Activated CD4-positive, alpha-beta memory T cell treated with anti-CD3 and anti-CD28 coated beads, Interleukin-2, amount 10 ng/mL, durations not matched to agents 7 days and 5 days (primary cell): ENCODE measurements at regions of chr10 and their contacts with region 1.

Region 1: GRCh38 chr10:87861953-87862678 is 1.2 kb downstream of the KLLN start:
- DNase-seq: peak; percentile 95
- H3K4me3 Mint-ChIP-seq: peak overlapping the region; percentile 92
- H3K27ac Mint-ChIP-seq: peak overlapping the region; percentile 93
- H3K4me1 Mint-ChIP-seq: peaks cover 29% of the 10 kb centered on the region
- H3K27me3 Mint-ChIP-seq: no peaks in the 10 kb centered on the region

Region 2: DNA sequence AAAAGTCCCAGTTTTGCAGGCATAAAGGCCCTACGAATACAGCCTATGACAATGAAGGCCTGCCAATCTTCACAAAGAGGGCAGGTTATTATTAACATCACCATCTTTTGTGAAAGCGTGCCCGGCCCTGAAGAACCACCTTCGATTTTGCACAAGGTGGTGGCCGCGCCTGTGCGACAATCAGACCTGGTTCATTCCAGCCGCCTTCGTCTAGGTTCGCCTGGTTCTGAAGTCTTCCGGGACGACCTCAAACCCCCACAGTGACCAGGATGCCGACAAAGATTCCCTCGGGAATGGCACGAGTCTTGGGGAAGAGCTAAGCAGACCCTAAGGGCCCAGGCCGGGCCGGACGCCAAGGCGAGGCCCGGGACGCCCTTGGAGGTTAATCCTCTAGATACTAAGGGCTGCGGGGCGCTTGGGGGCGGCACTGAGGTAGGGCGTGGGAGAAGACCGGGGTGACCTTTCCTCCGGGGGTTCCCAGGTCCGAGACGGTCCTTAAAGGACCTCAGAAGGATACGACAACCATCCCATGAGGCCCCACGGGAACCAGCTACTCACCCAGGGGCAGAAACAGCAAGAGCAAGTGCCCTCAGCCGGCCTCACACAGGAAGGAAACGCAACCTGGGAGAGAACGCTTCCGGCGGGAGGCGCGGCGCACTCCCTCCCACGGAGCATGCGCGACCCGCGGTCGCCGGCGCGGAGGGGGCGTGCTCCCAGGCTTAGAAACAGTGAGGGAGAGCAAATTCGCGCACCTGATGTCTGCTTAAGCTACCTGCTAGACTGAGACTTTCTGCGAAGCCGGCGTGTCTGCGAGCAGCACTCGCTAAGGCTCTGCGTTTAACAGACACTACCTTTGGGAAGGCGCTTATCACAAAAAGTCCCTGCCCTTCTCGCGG is 44.3 kb before region 1 on chr10 and contains the start of gene ATAD1:
- CTCF ChIA-PET with region 1: interaction called, 10 read pairs
- POLR2A ChIA-PET with region 1: interaction called, 74 read pairs
- DNase-seq: peak; percentile 91
- H3K4me3 Mint-ChIP-seq: peak within 1 kb of the TSS; percentile 98
- H3K27ac Mint-ChIP-seq: peak within 1 kb of the TSS; percentile 82
- H3K4me1 Mint-ChIP-seq: peaks cover 35% of the 10 kb centered on the region
- H3K27me3 Mint-ChIP-seq: peaks cover 2% of the 10 kb centered on the region
- total RNA-seq, gene ATAD1: 38.5 to 42.2 TPM

Region 3: GRCh38 chr10:87850742-87851205 is 11.3 kb before region 1 on chr10:
- CTCF ChIA-PET with region 1: interaction called, 16 read pairs
- POLR2A ChIA-PET with region 1: interaction called, 32 read pairs
- DNase-seq: peak; percentile 58
- H3K4me3 Mint-ChIP-seq: no peak overlapping the region
- H3K27ac Mint-ChIP-seq: no peak overlapping the region
- H3K4me1 Mint-ChIP-seq: peaks cover 11% of the 10 kb centered on the region
- H3K27me3 Mint-ChIP-seq: no peaks in the 10 kb centered on the region

Region 4: DNA sequence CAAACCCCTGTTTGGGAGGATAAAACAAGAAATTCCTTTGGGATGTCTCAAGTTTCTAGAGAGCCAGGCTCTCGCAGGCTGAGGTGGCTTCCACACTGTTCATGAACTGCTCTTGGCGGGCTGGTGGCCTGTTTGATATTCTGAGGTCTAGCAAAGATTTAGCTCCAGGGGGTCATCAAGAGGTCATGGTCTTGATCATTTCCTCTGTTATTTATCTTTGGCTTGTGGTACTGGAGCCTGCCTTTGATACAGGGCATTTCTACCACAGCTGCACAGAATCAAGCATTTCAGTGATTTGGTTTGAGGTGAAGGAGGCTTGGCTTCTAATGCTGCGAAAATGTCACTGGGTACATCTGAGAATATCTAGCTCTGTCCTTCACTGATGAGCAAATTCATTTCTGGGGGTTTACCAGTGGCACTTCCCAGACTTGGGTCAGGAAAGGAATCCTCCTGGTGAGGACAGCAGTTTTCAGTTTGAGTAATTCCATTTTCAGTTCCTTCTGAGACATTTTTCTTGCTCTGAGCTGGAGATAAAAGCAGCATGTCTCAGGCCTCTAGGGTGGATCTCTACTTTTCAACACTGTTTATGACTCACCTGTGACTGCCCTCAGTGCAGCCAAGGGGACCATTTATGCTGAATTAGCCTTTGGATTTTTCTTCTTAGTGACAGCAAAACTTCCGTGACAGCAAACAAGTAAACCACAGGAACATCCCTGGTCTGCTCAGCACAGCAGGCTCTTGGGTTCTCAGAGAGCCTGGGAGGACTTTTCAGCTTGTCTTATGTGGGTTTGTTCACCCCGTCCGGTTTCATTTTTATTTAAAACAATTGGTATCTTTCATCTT is 409.0 kb after region 1 on chr10:
- CTCF ChIA-PET with region 1: interaction called, 5 read pairs
- POLR2A ChIA-PET with region 1: interaction called, 47 read pairs
- DNase-seq: peak; percentile 75
- H3K4me3 Mint-ChIP-seq: peak overlapping the region; percentile 47
- H3K27ac Mint-ChIP-seq: peak overlapping the region; percentile 91
- H3K4me1 Mint-ChIP-seq: peaks cover 61% of the 10 kb centered on the region
- H3K27me3 Mint-ChIP-seq: no peaks in the 10 kb centered on the region

Region 5: GRCh38 chr10:88392222-88392621 is 530.1 kb after region 1 on chr10:
- CTCF ChIA-PET with region 1: interaction called, 52 read pairs
- POLR2A ChIA-PET with region 1: interaction called, 136 read pairs
- DNase-seq: peak; percentile 33
- H3K4me3 Mint-ChIP-seq: no peak overlapping the region
- H3K27ac Mint-ChIP-seq: peak overlapping the region; percentile 13
- H3K4me1 Mint-ChIP-seq: peaks cover 22% of the 10 kb centered on the region
- H3K27me3 Mint-ChIP-seq: no peaks in the 10 kb centered on the region

Region 6: GRCh38 chr10:88582806-88583583 is 720.9 kb after region 1 on chr10 and contains the start of gene RNLS:
- CTCF ChIA-PET with region 1: interaction called, 4 read pairs
- POLR2A ChIA-PET with region 1: interaction called, 15 read pairs
- DNase-seq: peak; percentile 70
- H3K4me3 Mint-ChIP-seq: peak within 1 kb of the TSS; percentile 80
- H3K27ac Mint-ChIP-seq: peak within 1 kb of the TSS; percentile 76
- H3K4me1 Mint-ChIP-seq: peaks cover 11% of the 10 kb centered on the region
- H3K27me3 Mint-ChIP-seq: peaks cover 11% of the 10 kb centered on the region
- total RNA-seq, gene RNLS: 1.3 to 2.2 TPM